ENCODE measurements at regions of chr11 and their contacts with region 1.

Region 1: GRCh38 chr11:84788220-84788619 is 838.9 kb downstream of the DLG2 start:
- H3K4me3 Mint-ChIP-seq: no peak overlapping the region
- H3K27ac Mint-ChIP-seq: no peak overlapping the region
- H3K4me1 Mint-ChIP-seq: no peaks in the 10 kb centered on the region
- H3K27me3 Mint-ChIP-seq: no peaks in the 10 kb centered on the region

Region 2: DNA sequence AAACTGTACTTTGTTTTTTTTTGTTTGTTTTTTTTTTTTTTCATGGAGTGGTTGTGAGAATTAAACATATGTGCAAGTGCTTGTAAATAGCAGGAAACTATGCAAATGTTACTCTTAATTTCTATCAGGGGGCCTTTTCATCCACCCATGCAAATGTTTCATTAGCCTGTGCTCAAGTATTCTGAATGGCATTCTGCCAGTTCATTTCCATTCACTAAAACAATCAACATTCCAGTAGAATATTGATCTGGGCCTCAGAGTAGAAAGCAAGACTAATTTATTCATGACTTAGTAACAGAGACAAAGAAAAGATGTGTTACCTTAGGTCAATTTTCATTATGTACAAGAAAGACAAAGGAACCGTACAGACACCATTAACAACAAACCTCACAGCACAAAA is 132.5 kb before region 1 on chr11:
- intact Hi-C with region 1: no loop called
- H3K4me3 Mint-ChIP-seq: no peak overlapping the region
- H3K27ac Mint-ChIP-seq: no peak overlapping the region
- H3K4me1 Mint-ChIP-seq: no peaks in the 10 kb centered on the region
- H3K27me3 Mint-ChIP-seq: no peaks in the 10 kb centered on the region

Region 3: DNA sequence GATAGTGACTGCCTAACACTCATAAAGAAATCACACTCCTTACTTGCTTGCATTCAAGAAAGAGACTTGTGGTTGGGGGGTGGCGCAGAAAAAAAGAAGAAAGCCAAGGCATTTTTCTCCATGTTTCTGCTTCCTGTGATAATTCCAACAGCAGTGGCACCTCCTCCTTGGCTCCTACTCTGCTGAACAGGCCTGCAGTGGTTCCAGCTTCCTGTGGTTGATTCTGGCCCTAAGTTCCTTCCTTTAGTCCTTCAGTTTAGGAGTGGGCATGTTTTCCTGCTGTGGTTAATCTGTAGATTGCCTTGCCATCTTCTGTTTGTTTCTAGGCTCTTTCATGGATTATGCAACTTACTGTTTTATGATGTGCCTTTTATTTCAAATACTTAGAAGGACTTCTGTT is 101.5 kb before region 1 on chr11:
- intact Hi-C with region 1: no loop called
- H3K4me3 Mint-ChIP-seq: no peak overlapping the region
- H3K27ac Mint-ChIP-seq: no peak overlapping the region
- H3K4me1 Mint-ChIP-seq: no peaks in the 10 kb centered on the region
- H3K27me3 Mint-ChIP-seq: no peaks in the 10 kb centered on the region

Region 4: DNA sequence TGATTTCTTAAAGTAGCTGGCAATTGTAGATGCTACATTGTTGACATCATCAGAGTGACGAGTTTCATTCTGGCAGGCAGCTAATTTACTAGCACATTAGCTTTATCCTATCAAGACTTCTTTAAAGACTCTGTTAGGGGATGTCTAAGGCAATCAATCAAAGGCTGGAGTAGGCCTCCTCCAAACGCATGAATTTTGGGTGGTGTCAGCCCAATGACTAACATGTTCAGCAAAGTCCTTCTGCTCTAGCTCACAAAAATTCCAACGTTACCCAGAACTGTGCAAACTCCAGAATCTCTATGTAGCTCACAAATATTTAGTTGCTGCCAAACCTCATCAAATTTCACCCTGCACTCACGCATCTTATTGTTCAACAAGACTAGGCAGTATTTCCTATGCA is 443.4 kb after region 1 on chr11:
- intact Hi-C with region 1: loop called (anchors 5 kb)
- H3K4me3 Mint-ChIP-seq: no peak overlapping the region
- H3K27ac Mint-ChIP-seq: no peak overlapping the region
- H3K4me1 Mint-ChIP-seq: no peaks in the 10 kb centered on the region
- H3K27me3 Mint-ChIP-seq: no peaks in the 10 kb centered on the region

Measured in dendritic cell treated with granulocyte-macrophage colony-stimulating factor and Interleukin-4, amounts not matched to agents 40 ng/mL and 50 ng/mL, for 4 days (primary cell).